Activated T-helper 2 cell treated with anti-CD3 and anti-CD28 coated beads, Interferon-gamma antibody, Interleukin-2, Interleukin-4, amounts not matched to agents 10 μg/mL and 5 μg/mL and 100 μg/mL, durations not matched to agents 14 hours and 24 hours and 36 hours (primary cell): ENCODE measurements at regions of chr7 and their contacts with region 1.

Region 1: GRCh38 chr7:22822486-22823141 is at the start of gene TOMM7:
- DNase-seq: peak; percentile 84
- H3K4me3 Mint-ChIP-seq: peak within 1 kb of the TSS; percentile 97
- H3K27ac Mint-ChIP-seq: peak within 1 kb of the TSS; percentile 93
- H3K4me1 Mint-ChIP-seq: peaks cover 31% of the 10 kb centered on the region
- H3K27me3 Mint-ChIP-seq: peaks cover 14% of the 10 kb centered on the region
- total RNA-seq, gene TOMM7: 216 and 221 TPM in 2 replicates

Region 2: GRCh38 chr7:22854158-22855048 is 31.8 kb after region 1 on chr7:
- intact Hi-C with region 1: loop called (anchors 1 kb)
- DNase-seq: peak; percentile 74
- H3K4me3 Mint-ChIP-seq: peak overlapping the region; percentile 95
- H3K27ac Mint-ChIP-seq: peak overlapping the region; percentile 94
- H3K4me1 Mint-ChIP-seq: peaks cover 31% of the 10 kb centered on the region
- H3K27me3 Mint-ChIP-seq: no peaks in the 10 kb centered on the region

Region 3: GRCh38 chr7:23105644-23106056 is 283.0 kb after region 1 on chr7 and contains the start of gene KLHL7:
- intact Hi-C with region 1: loop called (anchors 5 kb)
- DNase-seq: peak; percentile 94
- H3K4me3 Mint-ChIP-seq: peak within 1 kb of the TSS; percentile 93
- H3K27ac Mint-ChIP-seq: peak within 1 kb of the TSS; percentile 93
- H3K4me1 Mint-ChIP-seq: peaks cover 30% of the 10 kb centered on the region
- H3K27me3 Mint-ChIP-seq: no peaks in the 10 kb centered on the region
- total RNA-seq, gene KLHL7: 20.2 and 21.6 TPM in 2 replicates

Region 4: DNA sequence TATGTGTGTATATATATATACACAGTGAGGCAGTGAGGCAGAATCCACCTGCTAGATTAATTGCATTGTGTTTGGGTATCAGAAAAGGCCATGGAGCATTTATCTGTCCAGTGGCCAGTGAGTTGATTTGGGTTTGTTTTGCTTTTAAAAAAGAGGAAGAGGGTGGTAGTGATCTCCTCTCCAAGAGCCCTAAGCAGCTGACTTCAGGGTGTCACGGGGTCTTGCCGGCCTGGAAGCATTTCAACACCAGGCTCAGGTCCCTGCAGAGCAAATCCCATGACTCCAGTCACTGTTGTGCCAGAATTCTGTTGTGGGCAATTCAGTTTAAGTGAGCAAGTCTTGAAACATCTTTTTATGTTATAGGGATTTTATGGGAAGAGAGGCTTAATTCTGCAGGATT is 393.4 kb after region 1 on chr7:
- intact Hi-C with region 1: no loop called
- DNase-seq: no peak
- H3K4me3 Mint-ChIP-seq: no peak overlapping the region
- H3K27ac Mint-ChIP-seq: no peak overlapping the region
- H3K4me1 Mint-ChIP-seq: no peaks in the 10 kb centered on the region
- H3K27me3 Mint-ChIP-seq: peaks cover 19% of the 10 kb centered on the region